Activated CD4-positive, alpha-beta memory T cell treated with anti-CD3 and anti-CD28 coated beads for 36 hours (primary cell): ENCODE measurements at regions of chr3 and their contacts with region 1.

Region 1: DNA sequence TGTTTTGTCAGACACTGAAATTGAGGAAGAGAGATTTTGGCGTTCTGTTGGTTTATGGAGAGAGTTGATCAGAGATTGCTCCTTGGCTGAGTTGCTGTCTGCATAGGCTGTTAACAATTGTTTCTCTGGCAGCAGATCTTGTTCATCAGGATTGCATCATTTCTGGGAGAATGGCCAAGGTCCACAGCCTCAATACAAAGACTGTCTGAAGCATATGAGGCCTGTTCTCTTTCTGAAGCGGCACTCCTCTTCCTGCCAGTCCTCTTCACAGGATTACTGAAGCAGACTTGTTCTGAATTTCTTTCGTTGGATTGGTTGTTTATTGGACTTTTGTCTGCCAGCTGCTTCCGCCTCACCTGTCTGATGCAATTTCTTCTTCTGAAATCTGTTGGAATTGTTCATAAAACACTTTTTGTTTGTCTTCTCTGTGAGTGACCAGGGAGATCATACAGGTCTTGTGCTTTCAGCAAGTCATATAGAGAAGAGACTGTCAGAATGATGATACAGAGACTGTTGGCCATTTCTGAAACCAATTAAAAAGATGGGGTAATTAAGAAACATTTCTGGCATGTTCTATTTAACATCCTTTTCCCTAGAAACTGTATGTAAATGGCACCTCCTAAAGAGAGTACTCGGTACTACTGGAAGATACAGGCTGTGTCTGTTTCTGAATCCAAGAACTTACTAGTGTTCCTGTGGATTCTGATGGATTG is 25.5 kb downstream of the SETD5 start:
- DNase-seq: peak; percentile 40
- H3K4me3 Mint-ChIP-seq: no peak overlapping the region
- H3K27ac Mint-ChIP-seq: peak overlapping the region; percentile 90
- H3K4me1 Mint-ChIP-seq: peaks cover 39% of the 10 kb centered on the region
- H3K27me3 Mint-ChIP-seq: no peaks in the 10 kb centered on the region

Region 2: GRCh38 chr3:9387322-9387655 is 35.6 kb before region 1 on chr3:
- CTCF ChIA-PET with region 1: no interaction called
- POLR2A ChIA-PET with region 1: no interaction called
- intact Hi-C with region 1: loop called (anchors 5 kb)
- DNase-seq: no peak
- H3K4me3 Mint-ChIP-seq: no peak overlapping the region
- H3K27ac Mint-ChIP-seq: peak overlapping the region; percentile 46
- H3K4me1 Mint-ChIP-seq: peaks cover 36% of the 10 kb centered on the region
- H3K27me3 Mint-ChIP-seq: no peaks in the 10 kb centered on the region

Region 3: DNA sequence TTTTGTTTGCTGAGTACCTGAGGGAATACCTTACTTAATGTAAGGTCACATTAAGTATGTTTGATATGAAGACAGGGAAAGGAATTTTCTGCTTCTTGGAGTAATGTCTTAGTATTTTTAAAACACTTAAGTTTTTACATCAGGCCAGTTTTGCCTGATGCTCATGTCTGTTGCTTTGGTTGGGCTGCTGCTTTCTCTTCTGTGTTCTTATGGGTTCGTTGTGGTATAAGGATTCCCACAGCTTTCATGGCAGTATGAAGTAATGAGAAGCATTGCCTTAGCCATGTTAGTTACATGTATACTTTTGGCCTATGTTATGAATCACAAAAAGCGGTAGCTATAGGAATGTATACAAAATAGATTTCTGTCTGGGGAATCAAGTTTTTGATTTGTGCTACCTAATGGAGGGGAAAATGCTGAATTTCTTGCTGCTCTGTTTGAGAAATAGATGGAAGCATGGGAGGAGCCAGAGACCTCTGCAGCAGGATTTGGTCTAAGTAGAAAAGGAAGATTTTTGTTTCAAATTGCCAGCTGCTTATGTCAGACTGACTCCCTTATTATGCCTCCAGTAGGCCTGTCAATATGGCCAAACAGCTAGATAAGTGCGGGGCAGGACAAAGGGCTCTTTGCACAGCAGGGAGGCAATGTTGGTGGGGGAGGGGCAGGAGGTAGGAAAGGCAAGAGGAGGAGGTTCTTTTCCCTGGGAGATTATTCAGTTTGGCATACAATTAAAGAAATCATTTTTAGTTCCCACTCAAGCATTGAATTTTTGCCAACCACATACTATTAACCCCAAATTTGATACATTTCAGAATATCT is 20.2 kb before region 1 on chr3:
- CTCF ChIA-PET with region 1: interaction called, 3 read pairs
- POLR2A ChIA-PET with region 1: interaction called, 7 read pairs
- intact Hi-C with region 1: loop called (anchors 1 kb)
- DNase-seq: no peak
- H3K4me3 Mint-ChIP-seq: no peak overlapping the region
- H3K27ac Mint-ChIP-seq: no peak overlapping the region
- H3K4me1 Mint-ChIP-seq: peaks cover 65% of the 10 kb centered on the region
- H3K27me3 Mint-ChIP-seq: no peaks in the 10 kb centered on the region